ENCODE measurements at regions of chr5 and their contacts with region 1.

Region 1: GRCh38 chr5:168219515-168220410 is 71.7 kb upstream of the WWC1 start:
- DNase-seq: peak; percentile 37
- H3K4me3 Mint-ChIP-seq: no peak overlapping the region
- H3K27ac Mint-ChIP-seq: no peak overlapping the region
- H3K4me1 Mint-ChIP-seq: no peaks in the 10 kb centered on the region
- H3K27me3 Mint-ChIP-seq: peaks cover 15% of the 10 kb centered on the region

Region 2: GRCh38 chr5:167723254-167723871 is 496.4 kb before region 1 on chr5:
- CTCF ChIA-PET with region 1: interaction called, 32 read pairs
- POLR2A ChIA-PET with region 1: no interaction called
- DNase-seq: peak; percentile 58
- H3K4me3 Mint-ChIP-seq: no peak overlapping the region
- H3K27ac Mint-ChIP-seq: no peak overlapping the region
- H3K4me1 Mint-ChIP-seq: no peaks in the 10 kb centered on the region
- H3K27me3 Mint-ChIP-seq: no peaks in the 10 kb centered on the region

Region 3: GRCh38 chr5:168114444-168115017 is 105.2 kb before region 1 on chr5:
- CTCF ChIA-PET with region 1: interaction called, 21 read pairs
- POLR2A ChIA-PET with region 1: no interaction called
- DNase-seq: peak; percentile 48
- H3K4me3 Mint-ChIP-seq: no peak overlapping the region
- H3K27ac Mint-ChIP-seq: no peak overlapping the region
- H3K4me1 Mint-ChIP-seq: no peaks in the 10 kb centered on the region
- H3K27me3 Mint-ChIP-seq: peaks cover 7% of the 10 kb centered on the region

Region 4: GRCh38 chr5:168209244-168209995 is 10.3 kb before region 1 on chr5:
- CTCF ChIA-PET with region 1: interaction called, 10 read pairs
- POLR2A ChIA-PET with region 1: no interaction called
- DNase-seq: no peak
- H3K4me3 Mint-ChIP-seq: no peak overlapping the region
- H3K27ac Mint-ChIP-seq: no peak overlapping the region
- H3K4me1 Mint-ChIP-seq: no peaks in the 10 kb centered on the region
- H3K27me3 Mint-ChIP-seq: peaks cover 7% of the 10 kb centered on the region

Measured in activated CD4-positive, alpha-beta memory T cell treated with anti-CD3 and anti-CD28 coated beads, Interleukin-2, amount 10 ng/mL, durations not matched to agents 7 days and 5 days (primary cell).